ENCODE measurements at regions of chr5 and their contacts with region 1.

Region 1: GRCh38 chr5:98768160-98769005 is 5.1 kb upstream of the RGMB start:
- DNase-seq: peak; percentile 6
- H3K4me3 Mint-ChIP-seq: peak overlapping the region; percentile 71
- H3K27ac Mint-ChIP-seq: peak overlapping the region; percentile 70
- H3K4me1 Mint-ChIP-seq: peaks cover 45% of the 10 kb centered on the region
- H3K27me3 Mint-ChIP-seq: peaks cover 82% of the 10 kb centered on the region

Region 2: GRCh38 chr5:98349251-98349995 is 419.0 kb before region 1 on chr5:
- intact Hi-C with region 1: no loop called
- DNase-seq: no peak
- H3K4me3 Mint-ChIP-seq: no peak overlapping the region
- H3K27ac Mint-ChIP-seq: no peak overlapping the region
- H3K4me1 Mint-ChIP-seq: no peaks in the 10 kb centered on the region
- H3K27me3 Mint-ChIP-seq: no peaks in the 10 kb centered on the region

Region 3: GRCh38 chr5:98796197-98796972 is 28.0 kb after region 1 on chr5:
- intact Hi-C with region 1: loop called (anchors 1 kb)
- DNase-seq: peak; percentile 8
- H3K4me3 Mint-ChIP-seq: no peak overlapping the region
- H3K27ac Mint-ChIP-seq: no peak overlapping the region
- H3K4me1 Mint-ChIP-seq: no peaks in the 10 kb centered on the region
- H3K27me3 Mint-ChIP-seq: peaks cover 6% of the 10 kb centered on the region

Measured in activated T-helper 1 cell treated with anti-CD3 and anti-CD28 coated beads, Interleukin-12 subunit alpha, Interleukin-12 subunit beta, Interleukin-2, Interleukin-4 antibody, amounts not matched to agents 30 ng/mL and 10 ng/mL and 1 ng/mL, durations not matched to agents 14 hours and 24 hours and 36 hours (primary cell).